ENCODE measurements at regions of chr6 and their contacts with region 1.

Region 1: GRCh38 chr6:143828572-143828971 is 14.6 kb upstream of the LTV1 start:
- DNase-seq: no peak
- ATAC-seq: no peak
- H3K4me3 ChIP-seq: no peak overlapping the region
- H3K4me3 Mint-ChIP-seq: no peak overlapping the region
- H3K27ac ChIP-seq: no peak overlapping the region
- H3K27ac Mint-ChIP-seq: no peak overlapping the region
- H3K4me1 ChIP-seq: no peaks in the 10 kb centered on the region
- H3K4me1 Mint-ChIP-seq: no peaks in the 10 kb centered on the region
- H3K27me3 ChIP-seq: no peaks in the 10 kb centered on the region
- H3K27me3 Mint-ChIP-seq: no peaks in the 10 kb centered on the region

Region 2: GRCh38 chr6:143973097-143973966 is 144.8 kb after region 1 on chr6:
- CTCF ChIA-PET with region 1: interaction called in 1 of 2 experiments, 10 read pairs
- POLR2A ChIA-PET with region 1: no interaction called
- DNase-seq: no peak
- ATAC-seq: no peak
- H3K4me3 ChIP-seq: no peak overlapping the region
- H3K4me3 Mint-ChIP-seq: no peak overlapping the region
- H3K27ac ChIP-seq: no peak overlapping the region
- H3K27ac Mint-ChIP-seq: no peak overlapping the region
- H3K4me1 ChIP-seq: no peaks in the 10 kb centered on the region
- H3K4me1 Mint-ChIP-seq: peaks cover 5 to 9% (median 6%) of the 10 kb centered on the region in 3 donors
- H3K27me3 ChIP-seq: no peaks in the 10 kb centered on the region
- H3K27me3 Mint-ChIP-seq: no peaks in the 10 kb centered on the region

Measured in T-cell (primary cell).